ENCODE measurements at regions of chr7 and their contacts with region 1.

Region 1: DNA sequence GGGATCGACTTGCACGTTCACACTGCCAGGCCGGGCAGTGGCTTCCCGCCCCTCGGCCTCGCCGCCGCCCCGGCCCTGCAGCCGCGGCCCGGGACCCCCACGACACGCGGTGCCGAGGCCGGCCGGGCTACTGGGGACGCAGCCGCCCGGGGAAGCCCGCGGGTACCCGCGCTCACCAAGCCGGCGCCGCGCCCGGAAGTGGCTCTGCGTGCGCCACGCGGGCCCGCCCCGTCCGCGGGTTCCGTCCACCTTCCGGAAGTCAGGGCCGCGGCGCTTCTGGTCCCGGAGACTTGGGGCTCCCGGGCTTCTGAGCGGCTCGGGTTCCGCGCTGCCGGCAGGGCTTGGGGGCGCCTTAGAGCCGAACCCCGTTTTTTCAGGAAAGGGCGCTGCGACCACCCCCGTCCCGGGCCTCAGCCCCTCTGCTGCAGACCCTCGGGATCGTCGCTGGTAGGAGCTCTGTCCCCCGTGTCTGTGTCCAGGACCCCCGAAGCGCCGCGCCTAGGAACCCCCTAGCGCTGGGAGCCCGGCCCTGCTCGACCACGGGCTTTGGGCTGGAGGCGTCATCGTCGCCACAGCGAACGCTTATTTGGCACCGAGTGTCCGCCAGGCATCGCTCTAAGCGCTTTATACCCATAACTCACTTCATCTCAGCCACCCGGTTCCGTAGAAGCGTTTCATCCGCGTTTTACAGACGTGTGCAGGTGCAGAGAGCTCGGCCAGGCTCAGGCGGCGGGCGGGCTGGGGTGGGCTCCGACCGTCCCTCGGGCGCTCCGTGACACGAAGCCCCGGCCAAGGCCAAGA is at the start of gene PSMG3:
- DNase-seq: peak; percentile 97
- H3K4me3 Mint-ChIP-seq: peak within 1 kb of the TSS; percentile 95
- H3K27ac Mint-ChIP-seq: peak within 1 kb of the TSS; percentile 92
- H3K4me1 Mint-ChIP-seq: peaks cover 26% of the 10 kb centered on the region
- H3K27me3 Mint-ChIP-seq: no peaks in the 10 kb centered on the region
- total RNA-seq, gene PSMG3: 58.0 and 58.5 TPM in 2 replicates

Region 2: DNA sequence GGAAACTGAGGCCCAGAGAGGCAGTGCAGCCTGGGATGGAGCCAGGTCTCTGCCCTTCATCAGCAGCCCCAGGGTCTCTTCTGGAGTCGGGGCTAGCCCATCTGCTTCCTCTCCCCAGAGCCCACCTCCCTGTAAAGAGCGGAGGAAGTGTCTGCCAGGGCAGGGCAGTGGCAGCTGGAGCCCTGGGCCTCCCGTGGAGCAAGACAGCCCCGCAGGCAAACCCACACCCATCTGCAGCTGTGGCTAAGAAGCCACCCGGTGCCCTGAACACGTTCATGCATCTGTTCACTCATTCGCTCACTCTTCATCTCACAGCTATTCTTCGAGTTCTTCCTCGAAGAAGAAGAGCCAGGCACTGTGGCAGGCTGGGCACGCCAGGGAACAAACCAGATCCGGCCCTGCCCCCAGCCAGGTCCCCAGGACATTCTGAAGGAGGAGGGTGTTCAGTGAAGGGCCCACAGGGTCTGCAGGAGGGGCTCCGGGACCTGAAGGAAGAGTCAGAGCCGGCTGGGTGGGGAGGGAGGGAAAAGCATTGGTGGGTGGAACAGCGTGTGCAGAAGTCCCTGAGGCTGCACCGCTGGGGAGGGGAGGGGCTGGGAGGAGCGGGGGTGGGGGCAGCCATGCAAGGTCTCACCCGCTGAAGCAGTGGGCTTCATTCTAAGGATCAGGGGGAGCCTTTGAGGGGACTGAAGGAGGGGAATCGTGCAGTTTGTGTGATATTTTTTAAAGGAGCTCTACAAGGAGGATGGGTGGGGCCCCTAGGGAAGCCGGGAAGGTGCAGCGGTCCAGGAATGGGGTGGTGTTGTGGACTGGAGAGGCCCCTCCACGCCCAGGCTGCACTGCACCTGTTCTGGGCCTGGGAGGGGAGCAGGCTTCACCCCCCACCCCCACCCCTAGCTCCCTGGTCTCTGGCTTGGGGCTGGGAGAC is 238.2 kb before region 1 on chr7:
- intact Hi-C with region 1: no loop called
- DNase-seq: no peak
- H3K4me3 Mint-ChIP-seq: no peak overlapping the region
- H3K27ac Mint-ChIP-seq: no peak overlapping the region
- H3K4me1 Mint-ChIP-seq: no peaks in the 10 kb centered on the region
- H3K27me3 Mint-ChIP-seq: no peaks in the 10 kb centered on the region

Region 3: GRCh38 chr7:1459522-1459892 is 110.5 kb before region 1 on chr7:
- intact Hi-C with region 1: loop called (anchors 1 kb)
- DNase-seq: peak; percentile 99
- H3K4me3 Mint-ChIP-seq: peak overlapping the region; percentile 78
- H3K27ac Mint-ChIP-seq: no peak overlapping the region
- H3K4me1 Mint-ChIP-seq: peaks cover 2% of the 10 kb centered on the region
- H3K27me3 Mint-ChIP-seq: peaks cover 2% of the 10 kb centered on the region

Region 4: DNA sequence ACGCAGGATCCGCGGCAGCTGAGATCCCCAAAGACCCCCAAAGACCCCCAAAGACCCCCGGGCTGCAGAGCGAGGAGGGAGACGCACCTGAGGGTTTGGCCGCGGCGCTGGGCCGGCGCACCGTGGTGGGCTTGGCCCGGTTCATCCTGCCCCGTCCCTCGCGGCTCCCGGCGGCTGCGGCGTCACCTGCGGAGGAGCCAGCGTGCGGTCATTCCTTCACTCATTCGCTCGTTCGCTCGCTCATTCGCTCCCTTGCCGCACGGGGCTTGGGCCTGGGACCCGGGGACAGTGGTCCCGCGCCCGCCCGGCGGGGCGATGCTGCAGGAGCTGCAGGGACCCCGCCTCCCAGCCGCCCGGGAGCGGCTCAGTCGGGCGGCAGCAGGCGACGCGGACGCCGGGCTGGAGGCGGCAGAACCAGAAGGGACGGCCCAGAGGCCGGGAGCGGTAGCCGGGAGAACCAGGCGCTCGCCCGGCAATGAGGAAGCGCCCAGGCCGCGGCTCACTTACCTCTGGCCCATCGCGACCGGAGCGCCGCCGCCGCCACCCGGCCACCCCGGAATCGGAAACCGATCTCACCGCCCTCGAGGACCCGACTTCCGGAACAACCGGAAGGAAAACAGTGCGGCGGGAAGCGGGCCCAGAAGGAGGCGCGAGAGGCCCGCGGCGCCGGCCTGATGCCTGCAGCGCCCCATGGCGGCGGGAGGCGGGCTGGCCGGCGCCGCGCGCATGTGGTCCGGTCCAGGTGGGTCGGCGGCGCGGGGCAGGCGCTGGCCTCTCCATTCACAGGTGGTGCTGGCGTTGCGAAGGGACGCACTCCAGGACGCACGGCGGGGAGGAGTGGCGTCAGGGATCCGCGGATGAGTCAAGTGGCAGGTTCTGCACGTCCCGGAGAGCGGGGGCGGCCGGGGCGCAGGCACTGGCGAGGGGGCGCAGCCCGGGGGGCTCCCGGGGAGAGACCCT is 65.9 kb before region 1 on chr7 and contains the start of gene INTS1:
- intact Hi-C with region 1: loop called (anchors 2 kb)
- DNase-seq: peak; percentile 98
- H3K4me3 Mint-ChIP-seq: peak within 1 kb of the TSS; percentile 92
- H3K27ac Mint-ChIP-seq: peak within 1 kb of the TSS; percentile 92
- H3K4me1 Mint-ChIP-seq: peaks cover 33% of the 10 kb centered on the region
- H3K27me3 Mint-ChIP-seq: no peaks in the 10 kb centered on the region
- total RNA-seq, gene INTS1: 89.5 and 94.3 TPM in 2 replicates

Region 5: GRCh38 chr7:2232766-2233520 is 662.9 kb after region 1 on chr7 and contains the start of gene MAD1L1:
- intact Hi-C with region 1: loop called (anchors 5 kb)
- DNase-seq: peak; percentile 98
- H3K4me3 Mint-ChIP-seq: peak within 1 kb of the TSS; percentile 88
- H3K27ac Mint-ChIP-seq: peak within 1 kb of the TSS; percentile 87
- H3K4me1 Mint-ChIP-seq: peaks cover 20% of the 10 kb centered on the region
- H3K27me3 Mint-ChIP-seq: no peaks in the 10 kb centered on the region
- total RNA-seq, gene MAD1L1: 48.3 and 54.0 TPM in 2 replicates

Measured in activated CD4-positive, alpha-beta T cell treated with anti-CD3 and anti-CD28 coated beads, Interleukin-2, amount 10 ng/mL, durations not matched to agents 24 days and 14 days (primary cell).